CD4-positive, alpha-beta T cell (primary cell): ENCODE measurements at regions of chr1 and their contacts with region 1.

Region 1: DNA sequence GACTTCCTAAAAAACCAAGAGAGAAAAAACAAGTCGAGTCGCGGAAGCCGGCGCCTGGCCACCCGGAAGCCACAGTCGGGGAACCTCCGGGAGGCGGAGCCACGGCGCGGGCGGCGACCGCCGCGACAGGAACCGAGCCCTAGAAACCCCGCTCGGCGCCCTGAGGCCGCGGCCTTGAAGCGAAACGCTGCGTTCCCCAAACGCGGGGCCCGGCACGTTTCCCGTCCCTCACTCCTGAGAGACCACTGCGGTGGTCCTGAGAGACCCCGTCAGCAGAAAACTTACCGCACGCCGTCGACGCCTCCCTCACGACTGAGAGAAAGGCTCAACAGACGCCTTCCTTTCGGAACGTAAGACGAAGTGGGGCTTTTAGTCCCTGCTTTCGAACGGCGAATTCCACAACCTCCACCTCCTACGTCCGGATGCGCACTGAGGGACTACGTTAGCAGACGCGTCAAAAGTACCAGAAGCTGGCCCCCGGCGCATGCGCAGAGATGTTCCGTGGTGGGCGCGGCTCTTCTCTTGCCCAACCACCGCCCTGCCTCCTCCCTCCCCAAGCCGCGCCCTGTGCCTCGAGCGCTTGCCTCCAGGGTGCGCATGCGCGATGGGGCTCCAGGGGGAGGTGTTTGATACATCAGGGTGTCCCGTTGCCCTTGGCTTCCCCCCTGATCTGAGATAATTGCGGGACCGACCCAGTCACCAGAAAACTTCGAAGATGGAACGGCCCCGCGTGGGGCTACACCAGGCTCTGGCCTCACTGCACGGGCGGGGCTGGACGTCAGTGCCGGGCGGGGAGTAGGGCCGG is at the start of gene RSRP1:
- DNase-seq: peak; percentile 99 to 100 (median 100)
- ATAC-seq: peak; percentile 84
- H3K4me3 ChIP-seq: peak within 1 kb of the TSS; percentile 97
- H3K4me3 Mint-ChIP-seq: peak within 1 kb of the TSS; percentile 97
- H3K27ac ChIP-seq: peak within 1 kb of the TSS; percentile 98 to 99
- H3K27ac Mint-ChIP-seq: peak within 1 kb of the TSS; percentile 99
- H3K4me1 ChIP-seq: peaks cover 29% of the 10 kb centered on the region
- H3K4me1 Mint-ChIP-seq: peaks cover 60% of the 10 kb centered on the region
- H3K27me3 ChIP-seq: no peaks in the 10 kb centered on the region
- H3K27me3 Mint-ChIP-seq: peaks cover 5% of the 10 kb centered on the region
- CTCF ChIP-seq: no peak
- total RNA-seq, gene RSRP1: 395 to 428 TPM

Region 2: GRCh38 chr1:24586970-24587820 is 660.0 kb before region 1 on chr1:
- CTCF ChIA-PET with region 1: no interaction called
- POLR2A ChIA-PET with region 1: no interaction called
- intact Hi-C with region 1: no loop called
- DNase-seq: peak in 13 of 14 experiments; percentile 4 to 87 (median 48)
- ATAC-seq: peak; percentile 100
- H3K4me3 ChIP-seq: no peak overlapping the region
- H3K4me3 Mint-ChIP-seq: no peak overlapping the region
- H3K27ac ChIP-seq: no peak overlapping the region
- H3K27ac Mint-ChIP-seq: peak overlapping the region; percentile 66
- H3K4me1 ChIP-seq: peaks cover 3% of the 10 kb centered on the region
- H3K4me1 Mint-ChIP-seq: peaks cover 9% of the 10 kb centered on the region
- H3K27me3 ChIP-seq: no peaks in the 10 kb centered on the region
- H3K27me3 Mint-ChIP-seq: no peaks in the 10 kb centered on the region
- CTCF ChIP-seq: peak; percentile 86

Region 3: DNA sequence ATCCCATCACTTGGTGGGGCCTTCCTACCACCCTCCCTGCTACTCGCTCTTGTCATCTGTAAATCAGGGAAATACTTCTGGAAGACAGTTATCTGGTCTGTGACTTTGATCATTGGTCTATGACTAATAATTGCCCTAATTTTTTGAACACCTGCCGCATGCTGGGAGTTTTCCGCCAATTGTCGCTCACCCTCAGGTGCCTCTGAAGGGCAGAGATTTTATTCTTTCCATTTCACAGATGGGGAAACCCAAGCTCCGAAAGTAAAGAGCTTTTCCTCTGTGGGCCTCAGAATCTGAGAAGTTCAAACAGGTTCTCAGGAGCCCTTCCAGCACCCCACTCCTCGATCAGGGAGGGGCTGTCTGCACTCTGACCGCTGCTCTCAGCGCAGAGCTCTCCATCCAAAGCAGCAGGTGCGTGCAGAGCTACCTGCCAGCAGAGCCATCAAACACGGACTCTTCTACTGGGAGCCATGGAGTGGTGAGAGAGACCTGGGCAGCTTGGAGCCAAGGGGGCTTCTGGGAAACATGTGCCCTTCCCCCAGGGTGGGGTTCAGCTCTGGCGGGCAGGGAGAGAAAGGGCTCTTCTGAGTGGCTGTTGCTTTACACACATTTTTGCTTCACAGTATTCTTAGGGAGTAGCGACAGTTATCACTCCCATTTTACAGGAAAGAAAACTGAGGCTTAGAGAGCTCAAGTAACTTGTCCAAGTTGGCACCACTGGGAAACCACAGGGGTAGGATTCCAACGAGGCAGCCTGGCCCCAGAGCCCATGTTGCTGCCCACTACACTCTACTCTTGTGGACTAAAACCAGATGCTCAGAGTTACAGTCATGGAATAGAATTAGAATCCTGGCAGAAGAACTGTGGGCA is 311.4 kb before region 1 on chr1:
- CTCF ChIA-PET with region 1: no interaction called
- POLR2A ChIA-PET with region 1: no interaction called
- intact Hi-C with region 1: no loop called
- DNase-seq: no peak
- ATAC-seq: no peak
- H3K4me3 ChIP-seq: no peak overlapping the region
- H3K4me3 Mint-ChIP-seq: no peak overlapping the region
- H3K27ac ChIP-seq: no peak overlapping the region
- H3K27ac Mint-ChIP-seq: no peak overlapping the region
- H3K4me1 ChIP-seq: peaks cover 34% of the 10 kb centered on the region
- H3K4me1 Mint-ChIP-seq: peaks cover 25% of the 10 kb centered on the region
- H3K27me3 ChIP-seq: no peaks in the 10 kb centered on the region
- H3K27me3 Mint-ChIP-seq: no peaks in the 10 kb centered on the region
- CTCF ChIP-seq: no peak

Region 4: GRCh38 chr1:25232027-25232865 is 15.0 kb before region 1 on chr1 and contains the start of gene SYF2:
- CTCF ChIA-PET with region 1: interaction called, 12 read pairs
- POLR2A ChIA-PET with region 1: interaction called, 277 read pairs
- intact Hi-C with region 1: loop called (anchors 1 kb)
- DNase-seq: peak; percentile 76 to 96 (median 86)
- ATAC-seq: peak; percentile 90
- H3K4me3 ChIP-seq: peak within 1 kb of the TSS; percentile 65
- H3K4me3 Mint-ChIP-seq: no peak within 1 kb of the TSS
- H3K27ac ChIP-seq: peak within 1 kb of the TSS; percentile 85 to 93
- H3K27ac Mint-ChIP-seq: no peak within 1 kb of the TSS
- H3K4me1 ChIP-seq: peaks cover 30% of the 10 kb centered on the region
- H3K4me1 Mint-ChIP-seq: peaks cover 27% of the 10 kb centered on the region
- H3K27me3 ChIP-seq: no peaks in the 10 kb centered on the region
- H3K27me3 Mint-ChIP-seq: no peaks in the 10 kb centered on the region
- CTCF ChIP-seq: no peak
- total RNA-seq, gene SYF2: 93.3 to 98.9 TPM

Region 5: GRCh38 chr1:25338188-25338981 is 91.2 kb after region 1 on chr1 and contains the start of gene TMEM50A:
- CTCF ChIA-PET with region 1: interaction called, 4 read pairs
- POLR2A ChIA-PET with region 1: interaction called, 15 read pairs
- intact Hi-C with region 1: loop called (anchors 2 to 5 kb)
- DNase-seq: peak; percentile 82 to 93 (median 89)
- ATAC-seq: peak; percentile 69
- H3K4me3 ChIP-seq: peak within 1 kb of the TSS; percentile 69
- H3K4me3 Mint-ChIP-seq: peak within 1 kb of the TSS; percentile 98
- H3K27ac ChIP-seq: peak within 1 kb of the TSS; percentile 83 to 97
- H3K27ac Mint-ChIP-seq: peak within 1 kb of the TSS; percentile 81
- H3K4me1 ChIP-seq: peaks cover 12% of the 10 kb centered on the region
- H3K4me1 Mint-ChIP-seq: peaks cover 39% of the 10 kb centered on the region
- H3K27me3 ChIP-seq: no peaks in the 10 kb centered on the region
- H3K27me3 Mint-ChIP-seq: no peaks in the 10 kb centered on the region
- CTCF ChIP-seq: no peak
- total RNA-seq, gene TMEM50A: 82.6 to 83.1 TPM